PC-3 (cell line): ENCODE measurements at regions of chr1 and their contacts with region 1.

Region 1: GRCh38 chr1:78472851-78473496 is 17.8 kb upstream of the PTGFR start:
- DNase-seq: peak; percentile 98
- ATAC-seq: peak; percentile 77
- H3K4me3 ChIP-seq: 0 out of 2 replicates have a peak overlapping the region, but pooled peaks have one; percentile 26
- H3K27ac ChIP-seq: peak overlapping the region; percentile 97
- H3K4me1 ChIP-seq: peaks cover 58% of the 10 kb centered on the region
- H3K27me3 ChIP-seq: no peaks in the 10 kb centered on the region
- CTCF ChIP-seq: no peak

Region 2: DNA sequence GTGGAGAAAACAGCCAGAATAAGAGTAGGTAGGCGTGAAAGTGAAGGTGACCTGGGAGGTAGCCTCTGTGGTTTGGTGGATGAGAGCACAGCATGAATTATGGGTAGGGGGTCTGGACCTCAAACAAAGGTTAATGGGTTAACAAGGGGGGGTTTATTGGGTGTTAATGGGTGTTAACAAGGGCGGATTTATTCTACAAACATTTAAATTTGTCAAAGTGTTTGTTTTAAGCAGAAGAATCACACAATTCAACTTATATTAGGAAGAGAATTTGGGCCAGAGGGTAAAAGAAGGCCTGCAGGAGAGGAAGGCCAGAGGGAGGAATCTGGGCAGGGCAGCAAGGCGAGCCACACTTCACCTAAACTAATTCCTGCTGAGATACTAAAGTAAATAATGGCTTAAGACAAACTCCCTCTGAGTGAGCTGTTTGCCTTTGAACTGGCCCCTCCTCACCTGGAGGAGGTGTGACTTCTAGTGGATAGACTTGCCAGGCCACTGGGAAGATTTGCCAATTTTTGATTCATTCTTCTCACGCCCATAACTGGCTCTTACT is 235.5 kb before region 1 on chr1:
- CTCF ChIA-PET with region 1: no interaction called
- POLR2A ChIA-PET with region 1: interaction called, 5 read pairs
- intact Hi-C with region 1: loop called (anchors 1 kb)
- DNase-seq: peak; percentile 98
- ATAC-seq: peak; percentile 97
- H3K4me3 ChIP-seq: no peak overlapping the region
- H3K27ac ChIP-seq: peak overlapping the region; percentile 89
- H3K4me1 ChIP-seq: peaks cover 38% of the 10 kb centered on the region
- H3K27me3 ChIP-seq: no peaks in the 10 kb centered on the region
- CTCF ChIP-seq: no peak

Region 3: GRCh38 chr1:78340006-78340405 is 133.0 kb before region 1 on chr1:
- CTCF ChIA-PET with region 1: no interaction called
- POLR2A ChIA-PET with region 1: no interaction called
- intact Hi-C with region 1: loop called (anchors 2 kb)
- DNase-seq: peak; percentile 90
- ATAC-seq: peak; percentile 93
- H3K4me3 ChIP-seq: peak overlapping the region; percentile 17; the same call in 1 of the 2 replicates
- H3K27ac ChIP-seq: peak overlapping the region; percentile 98
- H3K4me1 ChIP-seq: peaks cover 24% of the 10 kb centered on the region
- H3K27me3 ChIP-seq: no peaks in the 10 kb centered on the region
- CTCF ChIP-seq: no peak

Region 4: DNA sequence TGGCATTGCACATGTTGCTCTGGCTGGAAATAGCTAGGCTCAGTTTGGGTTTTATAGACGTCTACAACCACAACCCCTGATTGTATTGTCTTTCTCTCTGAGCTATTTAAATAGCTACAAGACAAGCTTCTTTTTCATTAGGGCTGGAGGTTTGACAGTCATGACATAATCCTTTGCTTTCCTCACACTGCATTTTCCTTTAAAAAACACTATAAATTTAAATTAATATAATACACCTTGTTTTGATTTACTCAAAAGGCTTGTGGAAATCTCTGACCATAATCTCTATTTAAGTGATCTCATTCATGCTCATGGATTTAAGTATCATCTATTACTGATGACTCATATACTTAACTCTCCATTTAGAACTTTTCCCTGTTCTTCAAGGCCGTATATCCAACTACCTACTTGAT is 32.6 kb before region 1 on chr1:
- CTCF ChIA-PET with region 1: no interaction called
- POLR2A ChIA-PET with region 1: interaction called, 3 read pairs
- intact Hi-C with region 1: loop called (anchors 1 kb)
- DNase-seq: peak; percentile 80
- ATAC-seq: peak; percentile 72
- H3K4me3 ChIP-seq: no peak overlapping the region
- H3K27ac ChIP-seq: peak overlapping the region; percentile 89
- H3K4me1 ChIP-seq: peaks cover 45% of the 10 kb centered on the region
- H3K27me3 ChIP-seq: no peaks in the 10 kb centered on the region
- CTCF ChIP-seq: no peak

Region 5: GRCh38 chr1:78607334-78607927 is 134.5 kb after region 1 on chr1:
- CTCF ChIA-PET with region 1: no interaction called
- POLR2A ChIA-PET with region 1: no interaction called
- intact Hi-C with region 1: loop called (anchors 2 kb)
- DNase-seq: peak; percentile 69
- ATAC-seq: peak; percentile 64
- H3K4me3 ChIP-seq: no peak overlapping the region
- H3K27ac ChIP-seq: peak overlapping the region; percentile 57
- H3K4me1 ChIP-seq: peaks cover 22% of the 10 kb centered on the region
- H3K27me3 ChIP-seq: no peaks in the 10 kb centered on the region
- CTCF ChIP-seq: peak; percentile 78

Region 6: GRCh38 chr1:78918157-78918556 is 445.2 kb after region 1 on chr1:
- CTCF ChIA-PET with region 1: no interaction called
- POLR2A ChIA-PET with region 1: no interaction called
- intact Hi-C with region 1: no loop called
- DNase-seq: no peak
- ATAC-seq: peak; percentile 29
- H3K4me3 ChIP-seq: no peak overlapping the region
- H3K27ac ChIP-seq: no peak overlapping the region
- H3K4me1 ChIP-seq: no peaks in the 10 kb centered on the region; the same call in 1 of the 2 replicates
- H3K27me3 ChIP-seq: no peaks in the 10 kb centered on the region
- CTCF ChIP-seq: no peak